Motor neuron (in vitro differentiated cells): ENCODE measurements at regions of chr12 and their contacts with region 1.

Region 1: GRCh38 chr12:82685790-82686167 is 927 bp upstream of the TMTC2 start:
- ATAC-seq: peak; percentile 48 to 62 (median 58)
- H3K4me3 ChIP-seq: peak overlapping the region; percentile 60 to 81 (median 78)
- H3K27ac ChIP-seq: no peak overlapping the region
- H3K4me1 ChIP-seq: peaks cover 6 to 10% of the 10 kb centered on the region in 2 donors

Region 2: DNA sequence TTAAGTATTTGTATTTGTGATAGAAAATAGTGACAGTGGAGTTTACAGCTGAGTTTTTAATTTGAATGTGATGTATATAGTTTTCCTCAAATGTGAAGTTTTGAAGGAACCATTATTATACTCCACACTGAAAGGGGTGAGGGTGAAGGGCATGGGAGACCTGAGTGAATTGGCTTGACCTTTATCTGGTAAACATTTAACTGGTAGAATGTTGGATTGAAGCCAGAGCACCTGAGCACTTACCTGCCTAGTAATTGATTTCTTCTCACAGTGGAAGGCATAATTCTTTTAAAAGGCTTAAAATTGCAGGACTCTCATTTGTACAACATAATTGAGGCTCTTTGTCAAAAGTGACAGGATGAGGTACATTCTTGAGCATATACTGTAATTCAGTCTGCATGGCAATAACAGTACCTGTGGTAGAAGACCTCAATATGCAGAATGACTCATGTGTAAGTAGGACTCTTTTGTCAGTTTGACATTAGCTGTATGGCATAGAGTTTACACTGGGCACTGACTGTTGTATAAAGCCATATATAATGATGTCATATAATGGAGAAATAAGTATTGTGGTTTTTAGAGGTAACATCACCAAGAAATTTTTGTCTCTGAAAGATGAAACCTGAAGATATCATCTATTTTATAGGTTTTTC is 310.5 kb after region 1 on chr12:
- in situ Hi-C with region 1: loop called in 1 of 9 experiments (anchors 25 kb)
- ATAC-seq: peak in 3 of 8 experiments; percentile 21 to 43 (median 39)
- H3K4me3 ChIP-seq: no peak overlapping the region
- H3K27ac ChIP-seq: no peak overlapping the region
- H3K4me1 ChIP-seq: no peaks in the 10 kb centered on the region

Region 3: GRCh38 chr12:83153177-83153576 is 467.4 kb after region 1 on chr12:
- in situ Hi-C with region 1: no loop called
- ATAC-seq: no peak
- H3K4me3 ChIP-seq: no peak overlapping the region
- H3K27ac ChIP-seq: no peak overlapping the region
- H3K4me1 ChIP-seq: peaks cover 0 to 4% of the 10 kb centered on the region in 2 donors

Region 4: GRCh38 chr12:83434600-83434999 is 748.8 kb after region 1 on chr12:
- in situ Hi-C with region 1: loop called in 2 of 9 experiments (anchors 25 kb)
- ATAC-seq: no peak
- H3K4me3 ChIP-seq: no peak overlapping the region
- H3K27ac ChIP-seq: no peak overlapping the region
- H3K4me1 ChIP-seq: no peaks in the 10 kb centered on the region